ENCODE measurements at regions of chr5 and their contacts with region 1.

Region 1: GRCh38 chr5:74875994-74876791 is 10.0 kb upstream of the FAM169A start:
- DNase-seq: no peak
- H3K4me3 ChIP-seq: no peak overlapping the region
- H3K27ac ChIP-seq: no peak overlapping the region
- H3K4me1 ChIP-seq: no peaks in the 10 kb centered on the region
- H3K27me3 ChIP-seq: no peaks in the 10 kb centered on the region
- CTCF ChIP-seq: no peak

Region 2: GRCh38 chr5:74851684-74852353 is 24.4 kb before region 1 on chr5:
- CTCF ChIA-PET with region 1: no interaction called
- POLR2A ChIA-PET with region 1: interaction called, 13 read pairs
- intact Hi-C with region 1: no loop called
- DNase-seq: no peak
- H3K4me3 ChIP-seq: no peak overlapping the region; the same call in 1 of the 2 replicates
- H3K27ac ChIP-seq: peak overlapping the region; percentile 24
- H3K4me1 ChIP-seq: peaks cover 12% of the 10 kb centered on the region
- H3K27me3 ChIP-seq: no peaks in the 10 kb centered on the region
- CTCF ChIP-seq: no peak